GM12878 (cell line): ENCODE measurements at regions of chr2 and their contacts with region 1.

Region 1: GRCh38 chr2:113889471-113890252 is at the start of gene ACTR3:
- DNase-seq: peak; percentile 99
- ATAC-seq: peak; percentile 76
- H3K4me3 ChIP-seq: peak within 1 kb of the TSS; percentile 90
- H3K27ac ChIP-seq: peak within 1 kb of the TSS; percentile 100
- H3K4me1 ChIP-seq: peaks cover 6% of the 10 kb centered on the region
- H3K27me3 ChIP-seq: no peaks in the 10 kb centered on the region
- CTCF ChIP-seq: peak in 1 of 3 experiments; percentile 32; a peak in 2 of 6 replicates
- EP300 ChIP-seq: peak; percentile 66 to 68; a peak in 2 of 4 replicates
- POLR2A ChIP-seq: peak; percentile 91
- RAD21 ChIP-seq: peak; percentile 30; the same call in 1 of the 2 replicates
- polyA plus RNA-seq, gene ACTR3: 79.1 to 99.1 TPM

Region 2: DNA sequence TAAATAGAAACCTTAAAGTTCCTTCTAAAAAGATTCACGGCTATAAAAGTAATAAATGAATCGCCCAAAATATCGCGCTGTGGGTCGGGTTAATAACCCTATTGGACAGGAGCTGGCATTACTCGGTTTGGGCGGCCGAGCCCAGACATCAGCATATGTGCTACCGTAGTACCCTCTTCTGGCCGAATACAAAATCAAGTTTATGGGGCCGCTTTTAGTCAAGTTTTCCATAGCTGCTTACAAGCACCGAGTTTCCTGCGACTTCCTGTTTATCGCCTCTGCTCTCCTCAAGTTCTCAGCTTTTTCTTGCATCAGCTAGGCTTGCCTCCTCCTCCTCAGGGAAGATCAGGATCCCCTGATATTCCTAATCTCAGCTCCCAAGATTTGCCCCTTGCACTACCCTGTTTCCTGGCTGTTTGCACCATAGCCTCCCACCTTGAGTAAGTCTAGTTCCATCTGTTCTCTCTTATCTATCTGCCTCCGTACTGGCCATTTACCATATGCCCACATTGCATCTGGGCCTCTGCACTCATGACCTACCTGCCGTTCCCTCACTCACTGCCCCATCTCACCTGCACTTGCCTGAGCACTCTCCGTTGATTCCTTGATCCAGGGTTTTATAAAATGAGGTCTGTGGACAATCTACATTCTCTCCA is 189.3 kb before region 1 on chr2:
- CTCF ChIA-PET with region 1: interaction called, 12 read pairs
- POLR2A ChIA-PET with region 1: interaction called, 3 read pairs
- RAD21 ChIA-PET with region 1: interaction called, 9 read pairs
- SMC1A ChIA-PET with region 1: no interaction called
- in situ Hi-C with region 1: no loop called
- intact Hi-C with region 1: no loop called
- DNase-seq: peak; percentile 51
- ATAC-seq: peak; percentile 93
- H3K4me3 ChIP-seq: peak overlapping the region; percentile 60
- H3K27ac ChIP-seq: peak overlapping the region; percentile 71; the same call in 1 of the 2 replicates
- H3K4me1 ChIP-seq: peaks cover 17% of the 10 kb centered on the region
- H3K27me3 ChIP-seq: no peaks in the 10 kb centered on the region
- CTCF ChIP-seq: peak; percentile 50 to 79 (median 62); a peak in 5 of 6 replicates
- EP300 ChIP-seq: no peak
- POLR2A ChIP-seq: no peak
- RAD21 ChIP-seq: peak; percentile 90

Region 3: GRCh38 chr2:113791697-113792590 is 97.7 kb before region 1 on chr2:
- CTCF ChIA-PET with region 1: interaction called, 3 read pairs
- POLR2A ChIA-PET with region 1: no interaction called
- RAD21 ChIA-PET with region 1: no interaction called
- SMC1A ChIA-PET with region 1: interaction called, 3 read pairs
- in situ Hi-C with region 1: no loop called
- intact Hi-C with region 1: loop called (anchors 2 kb)
- DNase-seq: peak; percentile 61
- ATAC-seq: peak; percentile 96
- H3K4me3 ChIP-seq: no peak overlapping the region
- H3K27ac ChIP-seq: no peak overlapping the region
- H3K4me1 ChIP-seq: peaks cover 10% of the 10 kb centered on the region
- H3K27me3 ChIP-seq: no peaks in the 10 kb centered on the region
- CTCF ChIP-seq: no peak
- EP300 ChIP-seq: peak; percentile 90 to 94; a peak in 3 of 4 replicates
- POLR2A ChIP-seq: no peak
- RAD21 ChIP-seq: no peak

Region 4: GRCh38 chr2:113858764-113859163 is 30.9 kb before region 1 on chr2:
- CTCF ChIA-PET with region 1: interaction called, 3 read pairs
- POLR2A ChIA-PET with region 1: interaction called, 3 read pairs
- RAD21 ChIA-PET with region 1: interaction called, 6 read pairs
- SMC1A ChIA-PET with region 1: interaction called, 20 read pairs
- in situ Hi-C with region 1: no loop called
- intact Hi-C with region 1: loop called (anchors 1 kb)
- DNase-seq: no peak
- ATAC-seq: no peak
- H3K4me3 ChIP-seq: no peak overlapping the region
- H3K27ac ChIP-seq: no peak overlapping the region; the same call in 1 of the 2 replicates
- H3K4me1 ChIP-seq: peaks cover 43% of the 10 kb centered on the region
- H3K27me3 ChIP-seq: no peaks in the 10 kb centered on the region
- CTCF ChIP-seq: no peak
- EP300 ChIP-seq: no peak
- POLR2A ChIP-seq: no peak
- RAD21 ChIP-seq: no peak

Region 5: DNA sequence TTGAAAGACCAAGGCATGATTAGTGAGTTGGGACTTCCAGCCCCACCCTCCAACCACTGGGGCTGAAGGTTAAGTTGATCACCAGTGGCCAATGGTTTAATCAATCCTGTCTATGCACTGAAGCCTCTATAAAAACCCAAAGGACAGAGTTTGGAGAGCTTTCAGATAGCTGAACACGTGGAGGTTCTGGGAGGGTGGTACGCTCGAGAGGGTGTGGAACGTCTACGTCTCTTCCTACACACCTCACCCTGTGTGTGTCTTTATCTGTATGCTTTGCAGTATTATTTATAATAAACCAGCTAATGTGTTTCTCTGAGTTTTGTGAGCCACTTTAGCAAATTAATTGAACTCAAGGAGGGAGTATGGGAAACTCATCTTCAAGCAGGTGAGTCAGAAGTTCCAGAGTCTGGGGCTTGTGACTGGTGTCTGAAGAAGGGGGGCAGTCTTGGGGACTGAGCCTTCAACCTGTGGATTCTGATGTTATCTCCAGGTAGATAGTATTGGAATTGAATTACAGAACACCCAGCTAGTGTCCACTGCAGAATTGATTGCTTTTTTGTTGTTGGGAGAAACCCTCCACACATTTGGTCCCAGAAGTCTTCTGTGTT is 20.6 kb after region 1 on chr2:
- CTCF ChIA-PET with region 1: interaction called, 59 read pairs
- POLR2A ChIA-PET with region 1: interaction called, 80 read pairs
- RAD21 ChIA-PET with region 1: interaction called, 24 read pairs
- SMC1A ChIA-PET with region 1: interaction called, 189 read pairs
- in situ Hi-C with region 1: no loop called
- intact Hi-C with region 1: no loop called
- DNase-seq: no peak
- ATAC-seq: peak; percentile 56
- H3K4me3 ChIP-seq: no peak overlapping the region
- H3K27ac ChIP-seq: no peak overlapping the region
- H3K4me1 ChIP-seq: peaks cover 4% of the 10 kb centered on the region; the same call in 1 of the 2 replicates
- H3K27me3 ChIP-seq: no peaks in the 10 kb centered on the region
- CTCF ChIP-seq: no peak
- EP300 ChIP-seq: no peak
- POLR2A ChIP-seq: no peak
- RAD21 ChIP-seq: no peak

Region 6: DNA sequence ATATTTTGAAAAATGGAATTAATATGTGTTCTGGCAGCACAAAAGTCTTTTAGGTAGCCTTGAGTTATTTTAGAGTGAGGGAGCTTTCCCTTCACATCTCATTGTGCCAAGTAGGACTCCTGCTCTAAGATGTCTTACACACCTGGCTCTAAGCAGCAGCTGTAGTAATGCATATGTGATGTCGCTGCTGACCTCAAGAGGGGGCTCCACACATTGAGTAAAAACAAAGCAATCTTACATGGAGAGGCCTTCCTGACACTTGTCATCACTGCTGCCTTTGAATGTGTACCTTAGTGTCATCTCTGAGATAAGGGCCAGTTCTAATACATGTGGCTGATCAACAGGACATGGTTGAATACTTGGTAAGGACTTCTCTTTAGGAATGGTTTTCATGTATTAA is 76.0 kb after region 1 on chr2:
- CTCF ChIA-PET with region 1: interaction called, 12 read pairs
- POLR2A ChIA-PET with region 1: interaction called, 4 read pairs
- RAD21 ChIA-PET with region 1: interaction called, 8 read pairs
- SMC1A ChIA-PET with region 1: interaction called, 10 read pairs
- in situ Hi-C with region 1: no loop called
- intact Hi-C with region 1: no loop called
- DNase-seq: no peak
- ATAC-seq: peak; percentile 91
- H3K4me3 ChIP-seq: no peak overlapping the region
- H3K27ac ChIP-seq: no peak overlapping the region
- H3K4me1 ChIP-seq: no peaks in the 10 kb centered on the region
- H3K27me3 ChIP-seq: no peaks in the 10 kb centered on the region
- CTCF ChIP-seq: peak; percentile 57 to 65 (median 64); a peak in 5 of 6 replicates
- EP300 ChIP-seq: no peak
- POLR2A ChIP-seq: peak; percentile 52
- RAD21 ChIP-seq: peak; percentile 47; the same call in 1 of the 2 replicates

Region 7: GRCh38 chr2:114034742-114035141 is 145.1 kb after region 1 on chr2:
- CTCF ChIA-PET with region 1: no interaction called
- POLR2A ChIA-PET with region 1: no interaction called
- RAD21 ChIA-PET with region 1: no interaction called
- SMC1A ChIA-PET with region 1: no interaction called
- in situ Hi-C with region 1: no loop called
- intact Hi-C with region 1: no loop called
- DNase-seq: no peak
- ATAC-seq: no peak
- H3K4me3 ChIP-seq: no peak overlapping the region
- H3K27ac ChIP-seq: no peak overlapping the region
- H3K4me1 ChIP-seq: no peaks in the 10 kb centered on the region
- H3K27me3 ChIP-seq: no peaks in the 10 kb centered on the region; a peak in 1 of 4 replicates
- CTCF ChIP-seq: no peak
- EP300 ChIP-seq: no peak
- POLR2A ChIP-seq: no peak
- RAD21 ChIP-seq: no peak

Region 8: DNA sequence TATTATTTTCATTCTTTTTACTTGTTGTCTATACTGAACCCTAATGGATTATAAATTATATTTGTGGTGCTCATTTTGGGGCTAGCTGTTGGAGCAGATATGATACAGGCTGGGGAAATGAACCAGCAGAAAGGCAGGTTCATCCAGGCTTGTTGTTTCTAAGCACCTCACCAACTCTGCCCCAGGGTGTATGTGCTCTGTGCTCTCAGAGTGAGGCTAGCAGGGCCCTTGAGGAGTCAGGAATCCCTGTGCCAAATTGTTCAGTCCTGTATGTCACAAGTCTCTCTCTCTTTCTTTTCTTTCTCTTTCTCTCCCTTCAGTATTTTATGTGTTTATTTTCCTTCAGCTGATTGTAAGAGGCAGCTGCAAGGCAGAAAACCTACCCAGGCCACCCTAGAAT is 371.7 kb after region 1 on chr2:
- CTCF ChIA-PET with region 1: no interaction called
- POLR2A ChIA-PET with region 1: no interaction called
- RAD21 ChIA-PET with region 1: no interaction called
- SMC1A ChIA-PET with region 1: no interaction called
- in situ Hi-C with region 1: no loop called
- intact Hi-C with region 1: no loop called
- DNase-seq: no peak
- ATAC-seq: no peak
- H3K4me3 ChIP-seq: no peak overlapping the region
- H3K27ac ChIP-seq: no peak overlapping the region
- H3K4me1 ChIP-seq: no peaks in the 10 kb centered on the region
- H3K27me3 ChIP-seq: no peaks in the 10 kb centered on the region
- CTCF ChIP-seq: no peak
- EP300 ChIP-seq: no peak
- POLR2A ChIP-seq: no peak
- RAD21 ChIP-seq: no peak